ENCODE measurements at regions of chr2 and their contacts with region 1.

Region 1: GRCh38 chr2:157492189-157492773 is 48.4 kb upstream of the CYTIP start:
- DNase-seq: peak; percentile 53 to 84 (median 73)
- ATAC-seq: peak; percentile 94
- H3K4me3 ChIP-seq: no peak overlapping the region
- H3K4me3 Mint-ChIP-seq: no peak overlapping the region
- H3K27ac ChIP-seq: no peak overlapping the region
- H3K27ac Mint-ChIP-seq: no peak overlapping the region
- H3K4me1 ChIP-seq: peaks cover 4% of the 10 kb centered on the region
- H3K4me1 Mint-ChIP-seq: peaks cover 38% of the 10 kb centered on the region
- H3K27me3 ChIP-seq: no peaks in the 10 kb centered on the region
- H3K27me3 Mint-ChIP-seq: no peaks in the 10 kb centered on the region
- CTCF ChIP-seq: peak; percentile 86

Region 2: GRCh38 chr2:157443795-157444640 is 48.3 kb before region 1 on chr2 and contains the start of gene CYTIP:
- CTCF ChIA-PET with region 1: interaction called, 10 read pairs
- POLR2A ChIA-PET with region 1: interaction called, 4 read pairs
- intact Hi-C with region 1: loop called in 1 of 2 experiments (anchors 1 kb)
- DNase-seq: peak in 7 of 9 experiments; percentile 52 to 88 (median 64)
- ATAC-seq: peak; percentile 35
- H3K4me3 ChIP-seq: peak within 1 kb of the TSS; percentile 80 to 83
- H3K4me3 Mint-ChIP-seq: peak within 1 kb of the TSS; percentile 91
- H3K27ac ChIP-seq: peak within 1 kb of the TSS; percentile 88 to 92
- H3K27ac Mint-ChIP-seq: peak within 1 kb of the TSS; percentile 98
- H3K4me1 ChIP-seq: peaks cover 35% of the 10 kb centered on the region
- H3K4me1 Mint-ChIP-seq: peaks cover 46% of the 10 kb centered on the region
- H3K27me3 ChIP-seq: no peaks in the 10 kb centered on the region
- H3K27me3 Mint-ChIP-seq: no peaks in the 10 kb centered on the region
- CTCF ChIP-seq: no peak
- total RNA-seq, gene CYTIP: 425 to 430 TPM

Region 3: GRCh38 chr2:157480182-157480961 is 11.9 kb before region 1 on chr2:
- CTCF ChIA-PET with region 1: interaction called, 6 read pairs
- POLR2A ChIA-PET with region 1: interaction called, 3 read pairs
- intact Hi-C with region 1: loop called in 1 of 2 experiments (anchors 2 kb)
- DNase-seq: no peak
- ATAC-seq: no peak
- H3K4me3 ChIP-seq: no peak overlapping the region
- H3K4me3 Mint-ChIP-seq: no peak overlapping the region
- H3K27ac ChIP-seq: no peak overlapping the region
- H3K27ac Mint-ChIP-seq: peak overlapping the region; percentile 60
- H3K4me1 ChIP-seq: peaks cover 18% of the 10 kb centered on the region
- H3K4me1 Mint-ChIP-seq: peaks cover 22% of the 10 kb centered on the region
- H3K27me3 ChIP-seq: no peaks in the 10 kb centered on the region
- H3K27me3 Mint-ChIP-seq: no peaks in the 10 kb centered on the region
- CTCF ChIP-seq: no peak

Region 4: DNA sequence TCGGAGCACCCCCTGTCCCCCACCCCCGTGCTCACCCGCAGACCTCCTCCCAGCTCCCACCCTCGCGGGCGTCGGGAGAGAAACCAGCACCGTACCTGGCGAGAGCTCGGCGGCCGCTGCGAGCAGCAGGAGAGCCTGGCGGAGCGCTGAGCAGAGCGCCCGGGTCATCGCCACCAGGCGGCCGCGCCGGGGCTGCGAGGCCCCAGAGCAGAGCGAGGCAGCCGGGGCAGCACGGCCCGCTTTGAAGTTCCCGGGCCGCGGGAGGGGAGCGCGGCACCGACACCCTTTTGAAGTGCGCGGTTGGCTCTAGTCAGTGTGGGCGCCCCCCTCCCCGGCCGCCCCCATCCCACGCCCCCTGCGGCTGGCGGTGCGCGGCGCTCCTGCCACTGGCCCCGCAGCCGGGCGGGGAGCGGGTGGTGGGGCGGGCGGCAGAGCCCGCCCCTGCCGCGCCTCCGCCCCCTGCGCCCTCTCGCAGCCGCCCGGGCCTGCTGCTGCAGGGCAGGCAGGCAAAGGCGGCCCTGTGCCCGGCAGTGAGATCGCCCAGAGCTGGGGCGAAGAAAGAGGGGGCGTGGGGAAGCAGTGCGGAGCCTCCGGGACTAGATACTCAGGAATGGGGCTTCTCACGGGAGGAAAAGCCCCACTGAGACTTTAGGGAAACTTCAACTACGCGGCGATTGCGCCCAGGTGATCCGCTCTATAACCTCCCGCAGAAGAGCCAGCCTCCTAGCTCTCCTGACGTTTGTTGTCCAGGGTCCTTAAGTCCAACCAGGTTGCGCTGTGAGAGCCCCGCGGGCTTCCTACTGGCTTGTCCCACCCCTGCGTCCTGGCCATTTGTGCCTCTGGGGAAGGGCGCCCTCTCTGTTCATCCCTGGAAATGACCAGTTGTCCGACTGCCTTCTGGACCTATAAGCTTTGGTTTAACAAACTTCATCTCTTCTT is 136.5 kb after region 1 on chr2 and contains the start of gene ACVR1C:
- CTCF ChIA-PET with region 1: interaction called, 4 read pairs
- POLR2A ChIA-PET with region 1: no interaction called
- intact Hi-C with region 1: loop called in 1 of 2 experiments (anchors 2 kb)
- DNase-seq: peak; percentile 32 to 89 (median 62)
- ATAC-seq: peak; percentile 81
- H3K4me3 ChIP-seq: peak within 1 kb of the TSS; percentile 65 to 81
- H3K4me3 Mint-ChIP-seq: peak within 1 kb of the TSS; percentile 96
- H3K27ac ChIP-seq: peak within 1 kb of the TSS in 1 of 2 experiments; percentile 42
- H3K27ac Mint-ChIP-seq: peak within 1 kb of the TSS; percentile 76
- H3K4me1 ChIP-seq: peaks cover 29% of the 10 kb centered on the region
- H3K4me1 Mint-ChIP-seq: peaks cover 37% of the 10 kb centered on the region
- H3K27me3 ChIP-seq: no peaks in the 10 kb centered on the region
- H3K27me3 Mint-ChIP-seq: no peaks in the 10 kb centered on the region
- CTCF ChIP-seq: peak; percentile 26
- total RNA-seq, gene ACVR1C: 2.3 to 2.4 TPM

Region 5: DNA sequence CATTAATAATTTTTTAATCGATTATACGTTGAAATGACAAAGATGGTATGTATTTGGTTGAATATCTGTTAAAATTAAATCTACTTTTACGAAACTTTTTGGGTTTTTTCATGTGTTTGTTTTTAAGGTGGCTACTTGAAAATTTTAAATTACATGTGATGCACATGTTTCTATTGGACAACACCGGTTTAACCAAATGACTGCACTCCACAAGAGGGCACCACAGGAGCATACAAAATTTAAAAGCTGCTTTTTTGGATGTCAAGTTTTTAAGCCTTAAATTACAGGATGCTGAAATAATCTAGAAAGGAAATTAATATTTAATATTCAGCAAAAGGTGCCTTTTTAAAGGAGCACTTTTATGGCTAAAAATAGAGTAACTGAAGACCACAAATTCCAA is 285.1 kb after region 1 on chr2:
- CTCF ChIA-PET with region 1: no interaction called
- POLR2A ChIA-PET with region 1: no interaction called
- intact Hi-C with region 1: loop called in 1 of 2 experiments (anchors 10 kb)
- DNase-seq: peak in 8 of 9 experiments; percentile 4 to 55 (median 40)
- ATAC-seq: no peak
- H3K4me3 ChIP-seq: no peak overlapping the region
- H3K4me3 Mint-ChIP-seq: no peak overlapping the region
- H3K27ac ChIP-seq: no peak overlapping the region
- H3K27ac Mint-ChIP-seq: no peak overlapping the region
- H3K4me1 ChIP-seq: no peaks in the 10 kb centered on the region
- H3K4me1 Mint-ChIP-seq: peaks cover 11% of the 10 kb centered on the region
- H3K27me3 ChIP-seq: no peaks in the 10 kb centered on the region
- H3K27me3 Mint-ChIP-seq: no peaks in the 10 kb centered on the region
- CTCF ChIP-seq: peak; percentile 68

Region 6: GRCh38 chr2:158006961-158007719 is 514.9 kb after region 1 on chr2:
- CTCF ChIA-PET with region 1: interaction called, 8 read pairs
- POLR2A ChIA-PET with region 1: no interaction called
- intact Hi-C with region 1: loop called (anchors 1 kb)
- DNase-seq: peak in 1 of 9 experiments; percentile 24
- ATAC-seq: peak; percentile 40
- H3K4me3 ChIP-seq: no peak overlapping the region
- H3K4me3 Mint-ChIP-seq: no peak overlapping the region
- H3K27ac ChIP-seq: no peak overlapping the region
- H3K27ac Mint-ChIP-seq: no peak overlapping the region
- H3K4me1 ChIP-seq: no peaks in the 10 kb centered on the region
- H3K4me1 Mint-ChIP-seq: peaks cover 4% of the 10 kb centered on the region
- H3K27me3 ChIP-seq: no peaks in the 10 kb centered on the region
- H3K27me3 Mint-ChIP-seq: peaks cover 11% of the 10 kb centered on the region
- CTCF ChIP-seq: no peak